ENCODE measurements at regions of chr2 and their contacts with region 1.

Region 1: DNA sequence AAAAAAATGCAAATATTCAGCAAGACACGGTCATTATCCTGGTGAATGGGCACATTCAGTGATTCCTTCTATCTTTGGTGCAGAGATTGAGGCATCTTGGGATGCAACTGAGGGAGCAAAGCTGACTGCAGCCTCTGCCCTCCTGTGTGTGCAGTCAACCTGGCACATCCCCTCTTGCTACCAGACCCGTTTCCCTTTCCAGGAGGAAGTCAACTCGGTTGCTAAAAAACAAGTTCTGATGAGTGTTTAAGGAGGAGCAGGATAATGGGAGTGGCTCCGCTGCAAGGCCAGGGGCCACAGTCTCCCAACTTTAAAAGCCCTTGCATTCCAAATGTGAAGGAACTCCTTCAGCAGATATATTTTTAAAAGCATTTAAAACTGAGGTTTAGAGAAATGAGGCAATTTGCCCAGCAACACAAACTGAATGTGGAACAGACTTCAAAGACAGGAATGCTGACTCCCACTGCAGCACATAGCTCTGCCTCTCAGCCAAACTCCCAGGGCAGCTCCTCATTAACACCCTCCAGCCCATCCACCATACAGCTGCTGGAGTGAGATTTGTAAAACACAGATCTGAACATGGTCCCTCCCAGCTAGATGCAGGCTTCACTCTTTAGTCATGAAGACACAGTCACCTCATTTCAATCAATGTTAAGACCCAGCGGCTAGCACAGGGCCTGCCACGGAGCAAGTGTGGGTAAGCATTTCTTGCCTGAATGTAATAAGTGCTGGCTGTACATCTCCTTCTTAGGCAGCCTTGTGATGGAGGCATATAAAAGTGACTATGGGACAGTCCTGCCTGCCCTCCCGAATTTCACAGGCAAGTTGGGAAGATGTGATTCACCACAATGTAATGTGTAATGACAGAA is 54.3 kb downstream of the VSNL1 start:
- DNase-seq: no peak

Region 2: GRCh38 chr2:18369760-18370159 is 775.0 kb after region 1 on chr2:
- intact Hi-C with region 1: loop called in 1 of 2 experiments (anchors 5 kb)
- DNase-seq: no peak